T-cell (primary cell): ENCODE measurements at regions of chr2 and their contacts with region 1.

Region 1: DNA sequence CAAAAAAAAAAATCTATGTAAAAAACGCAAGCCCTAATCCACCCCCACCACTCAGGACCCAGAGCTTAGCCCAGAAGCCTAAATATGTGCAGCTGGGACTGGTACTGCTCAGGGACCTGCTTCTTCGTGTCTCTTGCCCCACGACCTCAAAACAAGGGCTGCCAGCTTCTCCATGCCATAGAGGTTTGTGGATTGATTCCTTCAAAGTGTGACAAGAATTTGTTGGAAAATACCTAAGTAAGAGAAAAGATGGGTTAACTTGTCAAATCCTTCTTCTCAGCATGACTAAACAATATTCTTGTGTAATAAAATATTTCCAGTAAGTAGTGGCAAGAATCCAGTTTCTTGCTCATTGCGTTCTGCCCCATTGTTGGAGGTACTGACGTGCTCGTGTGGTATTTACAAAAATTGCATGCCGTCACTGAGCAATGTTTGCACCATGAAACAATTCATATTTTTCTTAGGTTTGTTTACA is 825 bp upstream of the SCYGR1 start:
- DNase-seq: no peak
- ATAC-seq: no peak
- H3K4me3 ChIP-seq: no peak overlapping the region
- H3K4me3 Mint-ChIP-seq: no peak overlapping the region
- H3K27ac ChIP-seq: no peak overlapping the region
- H3K27ac Mint-ChIP-seq: no peak overlapping the region
- H3K4me1 ChIP-seq: no peaks in the 10 kb centered on the region
- H3K4me1 Mint-ChIP-seq: no peaks in the 10 kb centered on the region
- H3K27me3 ChIP-seq: peaks cover 0 to 6% of the 10 kb centered on the region in 2 experiments
- H3K27me3 Mint-ChIP-seq: peaks cover 0 to 3% of the 10 kb centered on the region in 2 donors

Region 2: GRCh38 chr2:227324995-227325838 is 63.4 kb before region 1 on chr2 and contains the start of gene MFF:
- CTCF ChIA-PET with region 1: no interaction called
- POLR2A ChIA-PET with region 1: interaction called in 1 of 2 experiments, 12 read pairs
- DNase-seq: peak; percentile 80 to 97 (median 91)
- ATAC-seq: peak; percentile 97 to 99 (median 98)
- H3K4me3 ChIP-seq: peak within 1 kb of the TSS; percentile 80 to 83
- H3K4me3 Mint-ChIP-seq: peak within 1 kb of the TSS; percentile 91 to 95 (median 91)
- H3K27ac ChIP-seq: peak within 1 kb of the TSS; percentile 56
- H3K27ac Mint-ChIP-seq: peak within 1 kb of the TSS; percentile 87 to 92
- H3K4me1 ChIP-seq: peaks cover 7 to 15% of the 10 kb centered on the region in 2 experiments
- H3K4me1 Mint-ChIP-seq: peaks cover 35 to 55% (median 48%) of the 10 kb centered on the region in 3 donors
- H3K27me3 ChIP-seq: peaks cover 0 to 3% of the 10 kb centered on the region in 2 experiments
- H3K27me3 Mint-ChIP-seq: no peaks in the 10 kb centered on the region
- total RNA-seq, gene MFF: 50.7 to 57.6 (median 54.0) TPM

Region 3: GRCh38 chr2:227374158-227374557 is 14.4 kb before region 1 on chr2:
- CTCF ChIA-PET with region 1: no interaction called
- POLR2A ChIA-PET with region 1: interaction called in 1 of 2 experiments, 11 read pairs
- DNase-seq: peak in 2 of 35 experiments; percentile 5 to 17
- ATAC-seq: no peak
- H3K4me3 ChIP-seq: no peak overlapping the region
- H3K4me3 Mint-ChIP-seq: no peak overlapping the region
- H3K27ac ChIP-seq: no peak overlapping the region
- H3K27ac Mint-ChIP-seq: no peak overlapping the region
- H3K4me1 ChIP-seq: no peaks in the 10 kb centered on the region
- H3K4me1 Mint-ChIP-seq: peaks cover 0 to 5% (median 4%) of the 10 kb centered on the region in 3 donors
- H3K27me3 ChIP-seq: peaks cover 0 to 7% of the 10 kb centered on the region in 2 experiments
- H3K27me3 Mint-ChIP-seq: peaks cover 6 to 15% of the 10 kb centered on the region in 2 donors